ENCODE measurements at regions of chr11 and their contacts with region 1.

Region 1: DNA sequence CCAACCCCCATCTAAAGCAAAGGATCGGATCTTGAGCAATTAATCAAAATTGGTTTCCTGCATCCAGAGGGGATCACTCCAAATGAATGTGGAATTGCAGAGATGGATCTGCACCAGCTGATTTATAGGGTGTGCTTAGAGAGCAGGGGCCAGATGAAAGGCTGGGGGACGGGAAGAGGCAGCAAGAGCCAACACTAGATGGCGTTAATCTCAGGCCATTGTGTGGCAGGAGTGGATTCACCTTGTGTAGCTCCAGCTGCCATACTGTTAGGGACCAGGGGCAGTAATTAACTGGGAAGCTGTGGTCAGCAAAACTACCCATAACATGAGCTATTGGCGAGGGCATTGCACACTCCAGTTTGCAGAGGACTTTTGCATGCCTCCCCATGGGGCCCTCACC is 35.6 kb downstream of the SERPINH1 start:
- DNase-seq: peak; percentile 61
- ATAC-seq: peak; percentile 90
- H3K4me3 Mint-ChIP-seq: no peak overlapping the region
- H3K27ac Mint-ChIP-seq: no peak overlapping the region
- H3K4me1 Mint-ChIP-seq: peaks cover 21% of the 10 kb centered on the region
- H3K27me3 Mint-ChIP-seq: no peaks in the 10 kb centered on the region; the same call in 1 of the 2 replicates
- CTCF ChIP-seq: no peak; the same call in 1 of the 2 replicates

Region 2: GRCh38 chr11:75562048-75562835 is 35.4 kb before region 1 on chr11 and contains the start of gene SERPINH1:
- CTCF ChIA-PET with region 1: interaction called, 11 read pairs
- POLR2A ChIA-PET with region 1: interaction called, 3 read pairs
- DNase-seq: peak; percentile 78
- ATAC-seq: peak; percentile 58
- H3K4me3 Mint-ChIP-seq: peak within 1 kb of the TSS; percentile 96
- H3K27ac Mint-ChIP-seq: peak within 1 kb of the TSS; percentile 99
- H3K4me1 Mint-ChIP-seq: peaks cover 74% of the 10 kb centered on the region
- H3K27me3 Mint-ChIP-seq: no peaks in the 10 kb centered on the region
- CTCF ChIP-seq: no peak
- total RNA-seq, gene SERPINH1: 411 to 478 TPM (median 473 TPM) in 3 replicates

Region 3: GRCh38 chr11:75582895-75583717 is 14.5 kb before region 1 on chr11:
- CTCF ChIA-PET with region 1: interaction called, 110 read pairs
- POLR2A ChIA-PET with region 1: interaction called, 7 read pairs
- DNase-seq: peak; percentile 77
- ATAC-seq: peak; percentile 72
- H3K4me3 Mint-ChIP-seq: peak overlapping the region; percentile 75
- H3K27ac Mint-ChIP-seq: peak overlapping the region; percentile 72
- H3K4me1 Mint-ChIP-seq: peaks cover 30% of the 10 kb centered on the region
- H3K27me3 Mint-ChIP-seq: peaks cover 16% of the 10 kb centered on the region
- CTCF ChIP-seq: no peak

Region 4: GRCh38 chr11:75633409-75634066 is 35.9 kb after region 1 on chr11:
- CTCF ChIA-PET with region 1: interaction called, 29 read pairs
- POLR2A ChIA-PET with region 1: no interaction called
- DNase-seq: no peak
- ATAC-seq: peak; percentile 67
- H3K4me3 Mint-ChIP-seq: no peak overlapping the region
- H3K27ac Mint-ChIP-seq: no peak overlapping the region
- H3K4me1 Mint-ChIP-seq: peaks cover 20% of the 10 kb centered on the region
- H3K27me3 Mint-ChIP-seq: no peaks in the 10 kb centered on the region
- CTCF ChIP-seq: no peak

Region 5: DNA sequence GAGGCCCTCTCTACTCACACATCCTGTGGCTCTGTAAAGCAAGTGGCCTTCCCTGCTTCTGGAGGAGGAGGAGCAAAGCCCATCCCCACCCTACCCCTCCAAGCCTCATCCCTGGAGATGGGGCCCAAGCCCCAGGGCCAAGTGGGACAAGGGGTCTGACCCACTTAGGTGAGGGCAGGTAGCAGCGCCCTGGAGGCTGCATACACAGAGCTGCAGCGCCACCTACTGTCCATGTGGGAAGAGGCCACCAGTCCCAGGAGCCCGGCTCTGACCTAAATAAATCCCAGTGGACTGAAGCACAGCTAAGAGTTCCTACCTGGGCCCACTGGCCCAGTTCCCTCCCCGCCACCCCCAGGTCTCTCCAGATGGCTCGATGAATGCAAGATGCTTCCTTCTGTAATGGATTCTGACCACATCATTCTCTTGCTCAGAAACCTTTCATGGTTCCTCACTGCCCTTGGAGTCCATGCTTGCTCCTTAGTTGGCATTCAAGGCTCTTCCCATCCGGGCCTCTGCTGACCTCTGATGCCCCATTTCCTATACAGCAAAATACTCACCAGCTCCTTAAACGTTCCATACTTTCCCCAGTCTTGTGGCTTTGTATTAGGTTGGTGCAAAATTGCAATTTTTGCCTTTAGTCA is 721.2 kb after region 1 on chr11:
- CTCF ChIA-PET with region 1: no interaction called
- POLR2A ChIA-PET with region 1: no interaction called
- DNase-seq: peak; percentile 94
- ATAC-seq: peak; percentile 88
- H3K4me3 Mint-ChIP-seq: no peak overlapping the region
- H3K27ac Mint-ChIP-seq: no peak overlapping the region
- H3K4me1 Mint-ChIP-seq: peaks cover 24% of the 10 kb centered on the region
- H3K27me3 Mint-ChIP-seq: peaks cover 41% of the 10 kb centered on the region
- CTCF ChIP-seq: peak; percentile 93